Activated CD4-positive, alpha-beta T cell treated with anti-CD3 and anti-CD28 coated beads, Interleukin-2, amount 10 ng/mL, durations not matched to agents 24 days and 14 days (primary cell): ENCODE measurements at regions of chr2 and their contacts with region 1.

Region 1: DNA sequence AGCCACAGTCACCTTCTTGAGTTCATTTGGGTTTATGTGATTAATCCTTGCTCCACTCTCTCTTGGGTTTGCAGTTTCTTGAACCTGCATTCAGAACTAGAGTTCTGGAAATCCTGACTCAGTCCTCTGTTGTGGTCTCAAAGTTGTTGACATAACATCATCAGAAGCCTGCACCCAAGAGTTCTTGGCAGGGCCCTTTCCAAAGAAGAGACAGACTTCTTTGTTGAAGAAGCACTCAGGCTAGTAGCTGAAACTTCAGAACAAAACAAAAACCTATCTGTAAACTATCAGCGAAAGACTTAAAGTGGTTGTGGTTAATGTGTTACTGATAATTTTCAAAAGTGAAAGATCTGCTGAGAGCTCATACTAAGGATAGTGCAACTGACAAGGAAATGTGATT is 120.8 kb downstream of the FAM168B start:
- DNase-seq: peak; percentile 79
- H3K4me3 Mint-ChIP-seq: no peak overlapping the region
- H3K27ac Mint-ChIP-seq: no peak overlapping the region
- H3K4me1 Mint-ChIP-seq: peaks cover 11% of the 10 kb centered on the region
- H3K27me3 Mint-ChIP-seq: peaks cover 6% of the 10 kb centered on the region

Region 2: GRCh38 chr2:130355578-130356431 is 616.6 kb before region 1 on chr2 and contains the start of gene PTPN18:
- intact Hi-C with region 1: no loop called
- DNase-seq: peak; percentile 91
- H3K4me3 Mint-ChIP-seq: peak within 1 kb of the TSS; percentile 86
- H3K27ac Mint-ChIP-seq: peak within 1 kb of the TSS; percentile 15
- H3K4me1 Mint-ChIP-seq: peaks cover 12% of the 10 kb centered on the region
- H3K27me3 Mint-ChIP-seq: no peaks in the 10 kb centered on the region
- total RNA-seq, gene PTPN18: 61.7 and 61.9 TPM in 2 replicates

Region 3: GRCh38 chr2:130824492-130825061 is 147.8 kb before region 1 on chr2:
- intact Hi-C with region 1: loop called (anchors 1 kb)
- DNase-seq: peak; percentile 92
- H3K4me3 Mint-ChIP-seq: peak overlapping the region; percentile 71
- H3K27ac Mint-ChIP-seq: peak overlapping the region; percentile 89
- H3K4me1 Mint-ChIP-seq: peaks cover 20% of the 10 kb centered on the region
- H3K27me3 Mint-ChIP-seq: peaks cover 21% of the 10 kb centered on the region

Region 4: DNA sequence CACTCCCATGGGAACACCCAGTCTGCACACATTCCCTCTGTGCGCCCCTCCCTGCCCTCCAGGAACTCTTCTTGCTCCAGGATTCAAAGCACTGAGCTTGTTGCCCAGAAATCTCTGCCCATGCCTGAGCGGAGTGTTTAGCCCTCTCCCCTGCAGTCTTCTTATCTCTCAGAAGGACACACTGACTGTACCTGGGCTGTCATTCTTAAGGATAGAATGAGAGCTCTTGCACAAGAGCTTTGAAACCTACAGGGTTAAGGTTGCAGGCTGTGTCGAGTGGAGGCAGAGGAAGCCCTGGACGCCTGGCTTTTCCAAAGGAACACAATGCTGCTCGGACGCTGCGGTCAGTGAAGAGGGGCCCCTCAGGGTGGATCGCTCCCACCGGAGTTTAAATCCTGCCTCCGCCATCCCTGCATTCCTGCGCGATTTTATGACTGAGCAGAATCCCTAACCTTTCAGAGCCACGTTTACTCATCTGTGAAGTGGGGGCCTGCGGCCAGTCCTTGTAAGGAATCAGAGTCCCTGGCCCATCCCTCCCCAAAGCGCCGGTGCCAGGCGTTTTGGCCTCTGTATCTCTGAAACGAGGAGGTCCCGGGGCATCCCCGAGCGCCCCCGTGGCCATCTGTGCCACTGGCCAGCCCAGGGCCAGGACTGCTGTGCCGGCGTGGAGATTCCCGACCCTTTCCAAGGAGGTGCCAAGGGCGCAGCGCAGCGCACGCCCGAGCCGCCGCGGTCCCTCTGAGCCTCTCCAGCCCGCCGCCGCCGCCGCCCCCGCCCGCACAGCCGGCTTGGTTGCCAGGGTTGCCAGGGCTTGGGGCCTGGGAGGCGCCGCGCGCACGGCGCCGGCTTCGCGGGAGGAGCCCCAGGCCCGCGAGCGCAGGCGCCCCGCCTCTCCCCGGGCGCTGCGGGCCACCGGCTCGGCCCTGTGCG is 62.0 kb after region 1 on chr2:
- intact Hi-C with region 1: no loop called
- DNase-seq: no peak
- H3K4me3 Mint-ChIP-seq: no peak overlapping the region
- H3K27ac Mint-ChIP-seq: no peak overlapping the region
- H3K4me1 Mint-ChIP-seq: no peaks in the 10 kb centered on the region
- H3K27me3 Mint-ChIP-seq: peaks cover 33% of the 10 kb centered on the region

Region 5: GRCh38 chr2:131093006-131093695 is 120.7 kb after region 1 on chr2 and contains the start of gene FAM168B:
- intact Hi-C with region 1: loop called (anchors 5 kb)
- DNase-seq: peak; percentile 97
- H3K4me3 Mint-ChIP-seq: peak within 1 kb of the TSS; percentile 95
- H3K27ac Mint-ChIP-seq: peak within 1 kb of the TSS; percentile 97
- H3K4me1 Mint-ChIP-seq: peaks cover 13% of the 10 kb centered on the region
- H3K27me3 Mint-ChIP-seq: peaks cover 7% of the 10 kb centered on the region
- total RNA-seq, gene FAM168B: 82.3 and 85.6 TPM in 2 replicates